Activated B cell treated with CpG ODN at 0.5 μM for 24 hours (primary cell): ENCODE measurements at regions of chr14 and their contacts with region 1.

Region 1: DNA sequence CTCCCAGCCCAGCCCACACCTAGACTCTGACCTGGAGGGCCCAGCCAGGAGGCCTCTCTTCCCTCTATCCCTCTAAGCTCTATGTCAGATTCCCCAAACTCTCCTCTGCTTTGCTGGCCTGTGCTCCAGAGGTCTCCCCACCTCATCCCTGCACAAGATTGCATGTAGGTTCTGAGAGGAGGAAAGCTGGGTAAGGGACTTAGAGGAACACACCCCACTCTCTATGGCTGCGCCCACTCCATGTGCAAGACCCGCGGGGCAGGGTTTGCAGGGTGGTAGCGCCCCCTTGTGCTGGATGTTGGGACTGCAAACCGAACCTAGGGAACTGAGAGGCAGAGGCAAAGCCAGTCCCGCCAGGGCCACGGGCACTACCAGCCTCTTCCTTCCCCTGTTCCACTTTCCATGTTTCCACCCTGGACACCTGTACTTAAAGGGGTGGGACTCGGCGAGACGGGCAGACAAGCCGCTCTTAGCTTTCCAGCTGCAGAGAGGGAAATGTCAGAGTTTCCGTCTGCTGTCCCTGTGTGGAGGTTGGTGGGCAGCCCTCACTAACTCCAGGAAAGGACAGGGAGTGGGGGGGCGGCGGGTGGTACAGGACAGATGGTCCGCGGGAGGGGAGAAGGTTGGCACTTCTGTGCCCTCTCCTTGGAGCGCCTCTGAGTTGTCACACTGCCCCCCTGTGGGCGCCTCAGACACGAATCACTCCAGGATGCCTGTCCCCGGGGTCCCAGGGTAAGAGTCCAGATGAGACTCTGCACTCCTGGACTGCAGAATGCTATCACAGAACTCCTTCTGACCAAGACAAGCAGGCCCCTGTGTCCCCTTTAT is 16.8 kb downstream of the MMP14 start:
- DNase-seq: peak; percentile 97
- ATAC-seq: peak; percentile 94
- H3K4me3 Mint-ChIP-seq: peak overlapping the region; percentile 79
- H3K27ac Mint-ChIP-seq: peak overlapping the region; percentile 78
- H3K4me1 Mint-ChIP-seq: peaks cover 6% of the 10 kb centered on the region
- H3K27me3 Mint-ChIP-seq: peaks cover 6% of the 10 kb centered on the region
- CTCF ChIP-seq: peak; percentile 81

Region 2: GRCh38 chr14:22314181-22314820 is 538.9 kb before region 1 on chr14:
- CTCF ChIA-PET with region 1: interaction called, 4 read pairs
- POLR2A ChIA-PET with region 1: no interaction called
- intact Hi-C with region 1: loop called (anchors 2 kb)
- DNase-seq: no peak
- ATAC-seq: peak; percentile 95
- H3K4me3 Mint-ChIP-seq: no peak overlapping the region
- H3K27ac Mint-ChIP-seq: no peak overlapping the region
- H3K4me1 Mint-ChIP-seq: no peaks in the 10 kb centered on the region
- H3K27me3 Mint-ChIP-seq: no peaks in the 10 kb centered on the region
- CTCF ChIP-seq: no peak

Region 3: DNA sequence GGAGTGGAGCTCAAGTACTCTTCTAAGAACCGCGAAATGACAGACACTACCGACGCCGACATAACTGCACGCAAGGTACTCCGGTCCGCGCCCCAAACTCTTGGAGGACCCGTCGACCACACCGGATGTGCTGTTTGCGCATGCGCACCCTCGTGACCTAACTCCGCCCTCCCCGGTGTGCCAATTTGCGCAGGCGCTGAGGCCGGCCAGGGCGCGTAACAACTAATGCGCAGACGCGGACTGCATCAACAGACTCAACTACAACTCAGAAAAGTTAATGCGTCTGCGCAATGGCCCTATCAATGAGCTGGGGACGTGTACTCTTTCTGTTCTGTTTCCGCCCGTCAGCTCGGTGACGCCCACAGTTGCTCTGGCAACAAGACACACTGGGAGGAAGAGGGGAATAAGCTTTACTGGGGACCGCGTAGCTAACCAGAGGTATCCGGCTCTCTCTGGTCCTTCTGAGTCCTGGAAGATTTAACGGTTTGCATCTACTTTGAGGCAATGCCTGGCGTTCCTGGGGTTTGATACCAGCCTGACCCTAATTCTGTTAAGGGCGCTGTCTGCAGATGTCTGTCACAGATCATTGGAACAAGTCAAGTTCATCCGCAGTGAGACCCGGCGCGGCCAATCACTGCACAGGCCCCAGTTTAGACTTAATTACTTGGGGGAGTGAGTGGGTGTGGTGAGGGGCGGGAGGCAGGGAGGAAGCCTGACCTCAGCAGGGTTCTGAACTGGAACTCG is 263.9 kb before region 1 on chr14 and contains the start of gene DAD1:
- CTCF ChIA-PET with region 1: interaction called, 5 read pairs
- POLR2A ChIA-PET with region 1: interaction called, 4 read pairs
- intact Hi-C with region 1: loop called (anchors 1 kb)
- DNase-seq: peak; percentile 99
- ATAC-seq: peak; percentile 88
- H3K4me3 Mint-ChIP-seq: peak within 1 kb of the TSS; percentile 99
- H3K27ac Mint-ChIP-seq: peak within 1 kb of the TSS; percentile 100
- H3K4me1 Mint-ChIP-seq: peaks cover 57% of the 10 kb centered on the region
- H3K27me3 Mint-ChIP-seq: peaks cover 2% of the 10 kb centered on the region
- CTCF ChIP-seq: no peak
- total RNA-seq, gene DAD1: 123 and 139 TPM in 2 replicates

Region 4: GRCh38 chr14:22748631-22749068 is 104.5 kb before region 1 on chr14:
- CTCF ChIA-PET with region 1: interaction called, 34 read pairs
- POLR2A ChIA-PET with region 1: no interaction called
- intact Hi-C with region 1: loop called (anchors 1 kb)
- DNase-seq: peak; percentile 24
- ATAC-seq: peak; percentile 78
- H3K4me3 Mint-ChIP-seq: peak overlapping the region; percentile 78
- H3K27ac Mint-ChIP-seq: peak overlapping the region; percentile 99
- H3K4me1 Mint-ChIP-seq: peaks cover 23% of the 10 kb centered on the region
- H3K27me3 Mint-ChIP-seq: no peaks in the 10 kb centered on the region
- CTCF ChIP-seq: no peak

Region 5: DNA sequence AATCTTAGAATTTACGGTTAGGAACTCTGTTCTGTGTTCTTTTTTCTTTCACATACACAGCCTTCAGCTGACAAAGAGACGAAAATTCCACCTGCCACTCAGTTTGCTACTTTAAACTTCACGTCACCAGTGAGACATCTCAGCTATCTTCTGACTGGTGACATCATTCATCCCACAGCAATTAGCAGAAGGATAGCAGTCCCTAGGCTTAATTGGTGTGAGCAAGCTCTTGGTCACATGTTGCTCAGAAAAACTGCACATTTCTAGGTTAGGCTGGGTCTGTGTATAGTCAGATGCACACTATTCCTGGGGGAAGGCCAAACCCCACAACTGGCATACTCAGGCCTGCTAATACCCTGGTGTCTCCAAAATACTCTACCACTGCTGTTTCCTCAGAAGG is 61.9 kb before region 1 on chr14:
- CTCF ChIA-PET with region 1: interaction called, 5 read pairs
- POLR2A ChIA-PET with region 1: no interaction called
- intact Hi-C with region 1: loop called (anchors 1 kb)
- DNase-seq: no peak
- ATAC-seq: no peak
- H3K4me3 Mint-ChIP-seq: peak overlapping the region; percentile 28
- H3K27ac Mint-ChIP-seq: peak overlapping the region; percentile 91
- H3K4me1 Mint-ChIP-seq: peaks cover 70% of the 10 kb centered on the region
- H3K27me3 Mint-ChIP-seq: no peaks in the 10 kb centered on the region
- CTCF ChIP-seq: no peak

Region 6: DNA sequence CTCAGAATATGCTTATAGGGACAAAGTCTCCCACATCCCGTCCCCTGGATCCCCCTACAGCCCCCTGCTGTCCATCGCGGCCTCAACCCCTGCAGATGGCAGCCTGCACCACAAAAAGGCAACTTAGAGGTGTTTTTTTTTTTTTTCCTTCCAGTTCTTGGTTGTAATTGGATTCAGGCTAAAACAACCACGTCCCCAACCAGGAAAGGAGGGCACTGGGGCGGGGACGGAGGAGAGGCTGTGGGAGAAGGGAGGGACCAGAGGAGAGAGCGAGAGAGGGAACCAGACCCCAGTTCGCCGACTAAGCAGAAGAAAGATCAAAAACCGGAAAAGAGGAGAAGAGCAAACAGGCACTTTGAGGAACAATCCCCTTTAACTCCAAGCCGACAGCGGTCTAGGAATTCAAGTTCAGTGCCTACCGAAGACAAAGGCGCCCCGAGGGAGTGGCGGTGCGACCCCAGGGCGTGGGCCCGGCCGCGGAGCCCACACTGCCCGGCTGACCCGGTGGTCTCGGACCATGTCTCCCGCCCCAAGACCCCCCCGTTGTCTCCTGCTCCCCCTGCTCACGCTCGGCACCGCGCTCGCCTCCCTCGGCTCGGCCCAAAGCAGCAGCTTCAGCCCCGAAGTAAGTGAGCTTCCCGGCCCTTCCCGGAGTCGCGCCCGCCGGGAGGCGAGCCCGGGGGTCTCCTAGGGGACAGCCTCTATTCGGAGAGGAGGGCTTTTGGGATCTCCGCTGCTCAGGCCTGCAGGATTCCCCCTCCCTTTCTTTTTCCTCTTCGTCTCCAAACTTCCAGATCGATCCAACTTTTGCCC is 16.6 kb before region 1 on chr14 and contains the start of gene MMP14:
- CTCF ChIA-PET with region 1: interaction called, 10 read pairs
- POLR2A ChIA-PET with region 1: interaction called, 9 read pairs
- intact Hi-C with region 1: no loop called
- DNase-seq: no peak
- ATAC-seq: peak; percentile 38
- H3K4me3 Mint-ChIP-seq: peak within 1 kb of the TSS; percentile 88
- H3K27ac Mint-ChIP-seq: peak within 1 kb of the TSS; percentile 76
- H3K4me1 Mint-ChIP-seq: peaks cover 17% of the 10 kb centered on the region
- H3K27me3 Mint-ChIP-seq: peaks cover 2% of the 10 kb centered on the region
- CTCF ChIP-seq: no peak
- total RNA-seq, gene MMP14: 3.4 and 4.1 TPM in 2 replicates

Region 7: GRCh38 chr14:22900081-22900799 is 47.1 kb after region 1 on chr14:
- CTCF ChIA-PET with region 1: interaction called, 20 read pairs
- POLR2A ChIA-PET with region 1: no interaction called
- intact Hi-C with region 1: loop called (anchors 1 kb)
- DNase-seq: no peak
- ATAC-seq: peak; percentile 91
- H3K4me3 Mint-ChIP-seq: no peak overlapping the region
- H3K27ac Mint-ChIP-seq: peak overlapping the region; percentile 43
- H3K4me1 Mint-ChIP-seq: peaks cover 5% of the 10 kb centered on the region
- H3K27me3 Mint-ChIP-seq: no peaks in the 10 kb centered on the region
- CTCF ChIP-seq: no peak

Region 8: GRCh38 chr14:22910916-22911315 is 57.8 kb after region 1 on chr14:
- CTCF ChIA-PET with region 1: no interaction called
- POLR2A ChIA-PET with region 1: no interaction called
- intact Hi-C with region 1: no loop called
- DNase-seq: no peak
- ATAC-seq: no peak
- H3K4me3 Mint-ChIP-seq: no peak overlapping the region
- H3K27ac Mint-ChIP-seq: no peak overlapping the region
- H3K4me1 Mint-ChIP-seq: peaks cover 29% of the 10 kb centered on the region
- H3K27me3 Mint-ChIP-seq: no peaks in the 10 kb centered on the region
- CTCF ChIP-seq: no peak